ENCODE measurements at regions of chr4 and their contacts with region 1.

Region 1: DNA sequence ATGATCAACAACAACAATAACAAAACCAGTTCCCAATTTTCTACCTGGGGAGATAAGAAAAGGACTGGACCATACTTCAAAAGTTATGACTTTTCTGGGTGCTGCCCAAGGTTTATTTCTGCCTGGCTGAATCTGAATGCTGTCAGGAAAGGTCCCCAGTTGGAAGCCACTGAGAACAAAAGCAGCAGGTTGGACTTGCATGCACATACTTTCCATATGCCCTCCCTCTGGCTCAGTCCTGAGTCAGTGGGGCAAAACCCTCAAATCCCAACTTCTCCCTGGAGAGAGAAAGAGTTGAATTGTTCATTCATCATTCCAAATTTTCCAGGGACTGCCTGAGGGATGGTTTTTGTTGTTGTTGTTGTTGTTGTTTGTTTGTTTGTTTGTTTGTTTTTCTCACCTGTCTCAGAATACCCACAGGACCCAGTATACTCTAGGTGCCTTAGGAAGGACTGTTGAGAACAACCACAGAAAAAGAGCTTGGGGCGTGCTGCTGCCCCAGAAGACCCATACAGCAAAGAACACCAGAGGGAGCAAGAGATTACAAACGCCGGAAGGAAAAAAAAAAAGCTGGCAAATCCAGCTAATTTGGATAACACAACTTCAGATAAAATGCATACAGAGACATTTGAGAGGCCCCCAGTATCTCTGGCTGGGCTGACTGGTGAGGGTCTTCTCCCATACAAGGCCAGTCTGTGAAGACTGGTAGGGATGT is 138.9 kb upstream of the INPP4B start:
- DNase-seq: peak; percentile 19
- H3K4me3 ChIP-seq: no peak overlapping the region
- H3K27ac ChIP-seq: no peak overlapping the region
- H3K4me1 ChIP-seq: no peaks in the 10 kb centered on the region
- H3K27me3 ChIP-seq: no peaks in the 10 kb centered on the region
- CTCF ChIP-seq: peak; percentile 38

Region 2: GRCh38 chr4:142832022-142832421 is 153.0 kb before region 1 on chr4:
- intact Hi-C with region 1: no loop called
- DNase-seq: no peak
- H3K4me3 ChIP-seq: no peak overlapping the region
- H3K27ac ChIP-seq: no peak overlapping the region
- H3K4me1 ChIP-seq: no peaks in the 10 kb centered on the region
- H3K27me3 ChIP-seq: no peaks in the 10 kb centered on the region
- CTCF ChIP-seq: no peak

Region 3: DNA sequence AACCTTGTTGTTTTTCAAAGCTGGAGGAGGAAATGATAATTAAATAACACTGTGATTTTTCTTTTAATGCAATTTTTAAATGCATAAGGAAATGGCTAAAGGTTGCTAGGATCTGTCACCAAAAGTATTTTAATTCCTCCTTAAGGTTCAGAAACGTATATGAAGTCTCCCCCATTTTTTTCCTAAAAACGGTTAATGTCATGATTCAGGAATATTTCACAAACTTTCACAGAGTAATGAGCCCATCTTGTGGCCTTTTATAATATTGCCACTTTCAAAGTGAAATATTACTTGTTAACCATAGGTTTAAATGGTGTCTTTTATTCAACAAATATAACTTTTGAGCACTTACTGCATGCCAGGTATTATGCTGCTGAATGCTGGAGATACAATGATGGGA is 100.2 kb after region 1 on chr4:
- intact Hi-C with region 1: loop called (anchors 10 kb)
- DNase-seq: no peak
- H3K4me3 ChIP-seq: no peak overlapping the region
- H3K27ac ChIP-seq: peak overlapping the region; percentile 72
- H3K4me1 ChIP-seq: no peaks in the 10 kb centered on the region
- H3K27me3 ChIP-seq: no peaks in the 10 kb centered on the region
- CTCF ChIP-seq: no peak

Region 4: DNA sequence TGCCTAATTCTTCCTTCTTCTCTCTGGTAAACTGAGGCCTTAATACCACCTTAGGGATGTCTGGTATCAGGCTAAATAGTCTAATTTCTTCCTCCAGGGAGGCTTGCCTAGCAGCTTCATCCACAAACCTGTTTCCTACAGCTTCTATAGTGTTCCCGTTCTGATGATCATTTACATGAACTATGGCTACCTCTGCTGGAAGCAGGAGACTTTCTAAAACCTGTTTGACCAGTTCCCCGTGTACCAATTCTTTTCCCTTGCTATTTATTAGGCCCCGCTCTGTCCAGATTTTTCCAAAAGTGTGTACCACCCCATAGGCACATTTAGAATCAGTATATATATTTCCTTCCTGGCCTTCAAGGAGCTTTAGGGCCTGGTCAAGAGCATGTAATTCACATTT is 193.9 kb after region 1 on chr4:
- intact Hi-C with region 1: loop called (anchors 10 kb)
- DNase-seq: peak; percentile 33
- H3K4me3 ChIP-seq: no peak overlapping the region
- H3K27ac ChIP-seq: no peak overlapping the region
- H3K4me1 ChIP-seq: no peaks in the 10 kb centered on the region
- H3K27me3 ChIP-seq: no peaks in the 10 kb centered on the region
- CTCF ChIP-seq: no peak

Measured in colonic mucosa (tissue), 4 donors.